HepG2 (cell line): ENCODE measurements at regions of chr2 and their contacts with region 1.

Region 1: GRCh38 chr2:11239666-11240462 is 84.6 kb downstream of the SLC66A3 start:
- DNase-seq: peak; percentile 70
- ATAC-seq: peak; percentile 54
- H3K4me3 ChIP-seq: no peak overlapping the region
- H3K27ac ChIP-seq: no peak overlapping the region
- H3K4me1 ChIP-seq: peaks cover 37% of the 10 kb centered on the region
- H3K27me3 ChIP-seq: no peaks in the 10 kb centered on the region
- CTCF ChIP-seq: no peak
- EP300 ChIP-seq: no peak
- POLR2A ChIP-seq: no peak
- RAD21 ChIP-seq: no peak

Region 2: DNA sequence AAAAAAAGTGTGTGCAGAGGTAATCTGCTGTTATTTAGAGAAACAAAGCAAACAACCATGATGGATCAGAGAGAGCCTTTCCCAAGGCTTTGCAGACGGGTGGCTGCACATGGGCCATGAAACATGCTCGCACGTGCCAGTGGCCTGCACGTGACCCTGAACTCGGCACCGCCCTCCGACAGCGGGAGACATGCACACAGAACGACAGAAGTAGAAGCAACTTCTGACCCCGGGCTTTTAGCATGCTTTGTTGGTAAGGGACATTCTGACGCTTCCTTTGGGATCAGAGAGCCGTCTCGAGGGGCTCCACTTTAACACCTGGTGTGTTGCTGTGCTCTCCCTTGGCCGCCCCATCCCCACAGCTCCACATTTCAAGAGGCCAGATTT is 215.6 kb before region 1 on chr2:
- CTCF ChIA-PET with region 1: no interaction called
- POLR2A ChIA-PET with region 1: no interaction called
- in situ Hi-C with region 1: no loop called
- intact Hi-C with region 1: no loop called
- DNase-seq: peak; percentile 14
- ATAC-seq: peak; percentile 24
- H3K4me3 ChIP-seq: no peak overlapping the region
- H3K27ac ChIP-seq: no peak overlapping the region
- H3K4me1 ChIP-seq: no peaks in the 10 kb centered on the region
- H3K27me3 ChIP-seq: peaks cover 7 to 43% of the 10 kb centered on the region in 2 experiments; a peak in 4 of 5 replicates
- CTCF ChIP-seq: no peak
- EP300 ChIP-seq: no peak
- POLR2A ChIP-seq: no peak
- RAD21 ChIP-seq: no peak

Region 3: GRCh38 chr2:11292464-11293255 is 52.8 kb after region 1 on chr2:
- CTCF ChIA-PET with region 1: no interaction called
- POLR2A ChIA-PET with region 1: no interaction called
- in situ Hi-C with region 1: no loop called
- intact Hi-C with region 1: no loop called
- DNase-seq: no peak
- ATAC-seq: peak; percentile 54
- H3K4me3 ChIP-seq: no peak overlapping the region
- H3K27ac ChIP-seq: no peak overlapping the region
- H3K4me1 ChIP-seq: peaks cover 34% of the 10 kb centered on the region
- H3K27me3 ChIP-seq: no peaks in the 10 kb centered on the region
- CTCF ChIP-seq: no peak
- EP300 ChIP-seq: no peak
- POLR2A ChIP-seq: no peak
- RAD21 ChIP-seq: no peak

Region 4: DNA sequence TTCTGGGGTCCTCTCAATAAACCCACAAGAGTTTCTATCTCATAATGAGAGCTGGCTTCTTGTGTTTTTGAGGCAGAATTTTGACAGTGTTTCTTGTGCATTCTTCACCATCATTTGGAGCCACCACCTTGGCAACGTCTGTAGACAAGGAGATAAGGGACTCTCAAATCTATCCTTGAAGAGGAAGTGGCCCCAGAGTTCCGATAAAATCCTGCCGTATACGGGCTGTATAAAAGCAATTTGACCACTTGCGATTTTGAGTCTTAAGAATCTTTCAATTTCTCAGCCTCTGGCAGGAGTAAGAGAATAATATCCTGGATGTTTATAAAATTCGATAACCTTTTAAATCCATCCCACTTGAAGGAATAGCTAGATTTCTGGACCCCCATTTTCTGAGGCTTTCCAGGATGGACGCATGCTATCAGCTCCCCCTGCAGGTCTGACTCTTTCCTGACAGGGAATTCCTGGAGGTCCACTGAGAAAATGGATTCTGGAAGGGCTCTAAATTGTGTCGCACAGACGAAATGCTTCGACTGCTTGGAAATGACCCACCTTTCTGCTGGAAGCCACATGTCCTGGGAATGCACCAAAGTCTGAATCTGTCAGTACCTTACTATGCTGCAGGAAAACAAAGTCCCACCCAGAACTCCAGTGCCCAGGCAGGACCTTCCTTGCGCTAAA is 172.0 kb after region 1 on chr2:
- CTCF ChIA-PET with region 1: interaction called, 3 read pairs
- POLR2A ChIA-PET with region 1: no interaction called
- in situ Hi-C with region 1: loop called (anchors 5 kb)
- intact Hi-C with region 1: loop called (anchors 5 kb)
- DNase-seq: peak; percentile 65
- ATAC-seq: peak; percentile 78
- H3K4me3 ChIP-seq: no peak overlapping the region; a peak in 1 of 6 replicates
- H3K27ac ChIP-seq: no peak overlapping the region
- H3K4me1 ChIP-seq: peaks cover 33% of the 10 kb centered on the region
- H3K27me3 ChIP-seq: no peaks in the 10 kb centered on the region
- CTCF ChIP-seq: peak; percentile 92
- EP300 ChIP-seq: no peak
- POLR2A ChIP-seq: no peak
- RAD21 ChIP-seq: peak; percentile 93